ENCODE measurements at regions of chr18 and their contacts with region 1.

Region 1: DNA sequence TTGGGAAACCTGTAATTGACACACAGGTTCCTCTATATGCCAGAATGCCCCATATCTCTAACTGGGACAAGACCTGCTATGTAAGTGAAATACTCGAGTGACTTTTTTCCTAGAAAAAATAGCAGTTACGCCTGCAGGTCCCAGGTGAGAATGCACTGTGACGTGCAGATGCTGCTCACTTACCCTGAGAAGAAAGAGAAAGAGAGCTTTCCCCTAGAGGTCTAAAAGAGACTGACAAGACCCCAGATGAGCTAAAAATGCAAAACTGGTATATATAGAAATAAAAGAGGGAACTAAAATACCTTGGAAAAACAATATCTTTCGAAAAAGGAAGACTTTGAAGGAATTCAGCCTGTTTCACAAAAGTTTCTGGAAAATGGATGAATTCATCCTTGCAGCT is 383.0 kb upstream of the DCC start:
- DNase-seq: no peak
- ATAC-seq: no peak

Region 2: DNA sequence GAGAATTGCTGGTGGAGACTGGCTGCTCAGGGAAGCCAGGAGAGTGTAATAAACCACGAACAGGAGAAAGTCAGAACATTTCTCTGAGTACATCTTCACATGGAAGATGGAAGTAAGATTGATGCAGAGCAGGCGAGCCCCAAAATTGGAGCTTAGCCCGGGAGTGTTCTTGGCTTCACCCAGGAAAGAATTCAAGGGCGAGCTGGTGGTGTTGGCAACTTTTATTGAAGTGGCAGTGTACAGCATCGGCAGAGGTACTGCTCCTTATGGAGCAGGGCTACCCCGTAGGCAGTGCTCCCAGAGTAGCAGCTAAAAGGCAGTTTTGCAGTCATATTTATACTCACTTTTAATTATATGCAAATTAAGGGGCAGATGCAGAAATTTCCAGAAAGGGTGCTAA is 478.1 kb before region 1 on chr18:
- intact Hi-C with region 1: loop called (anchors 5 kb)
- DNase-seq: no peak
- ATAC-seq: no peak

Measured in sciatic nerve (tissue), 2 donors.